Activated B cell treated with CpG ODN at 0.5 μM for 24 hours (primary cell): ENCODE measurements at regions of chr13 and their contacts with region 1.

Region 1: DNA sequence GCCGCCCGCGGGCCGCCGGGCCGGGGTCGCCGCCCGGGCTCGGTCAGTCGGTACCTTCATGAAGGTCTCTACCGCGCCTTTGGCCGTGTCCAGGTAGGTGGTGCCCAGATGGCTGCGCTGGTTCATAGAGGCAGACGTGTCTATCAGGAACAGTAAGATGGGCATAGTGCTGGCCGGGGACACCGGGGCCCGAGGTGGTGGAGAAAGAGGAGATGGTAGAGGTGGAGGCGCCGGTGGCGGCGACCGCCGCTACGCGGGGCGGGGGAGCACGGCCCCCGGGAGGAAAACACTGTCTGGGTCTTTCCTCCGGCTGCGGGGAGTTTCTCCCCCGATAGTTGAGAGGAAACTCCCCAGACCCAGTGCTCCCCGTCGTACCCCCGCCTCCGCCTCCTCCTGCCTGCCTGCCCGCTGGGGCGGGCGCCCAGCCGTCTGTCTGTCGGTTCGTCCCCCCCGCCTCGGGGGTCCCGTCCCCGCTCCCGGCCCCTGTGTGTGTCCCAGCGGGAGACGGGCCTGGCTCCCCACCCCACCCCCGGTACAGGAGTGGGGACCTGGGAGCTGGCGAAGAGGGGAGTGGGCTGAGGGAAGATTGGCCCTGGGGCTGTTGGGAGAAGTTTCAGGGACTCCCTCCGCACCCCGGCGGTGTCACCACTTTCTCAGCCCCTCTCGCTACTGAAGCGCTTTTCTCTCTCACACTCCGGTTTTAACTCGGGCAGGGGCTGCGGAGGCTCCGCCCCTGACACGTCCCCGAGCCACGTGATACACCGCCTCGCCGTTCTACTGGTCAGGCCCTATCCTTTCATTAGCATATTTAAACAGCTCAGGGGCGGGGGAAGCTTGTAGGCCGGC is at the start of gene INTS6:
- DNase-seq: peak; percentile 97
- ATAC-seq: peak; percentile 74
- H3K4me3 Mint-ChIP-seq: peak within 1 kb of the TSS; percentile 91
- H3K27ac Mint-ChIP-seq: peak within 1 kb of the TSS; percentile 98
- H3K4me1 Mint-ChIP-seq: peaks cover 39% of the 10 kb centered on the region
- H3K27me3 Mint-ChIP-seq: no peaks in the 10 kb centered on the region
- CTCF ChIP-seq: no peak
- total RNA-seq, gene INTS6: 55.3 and 68.7 TPM in 2 replicates

Region 2: DNA sequence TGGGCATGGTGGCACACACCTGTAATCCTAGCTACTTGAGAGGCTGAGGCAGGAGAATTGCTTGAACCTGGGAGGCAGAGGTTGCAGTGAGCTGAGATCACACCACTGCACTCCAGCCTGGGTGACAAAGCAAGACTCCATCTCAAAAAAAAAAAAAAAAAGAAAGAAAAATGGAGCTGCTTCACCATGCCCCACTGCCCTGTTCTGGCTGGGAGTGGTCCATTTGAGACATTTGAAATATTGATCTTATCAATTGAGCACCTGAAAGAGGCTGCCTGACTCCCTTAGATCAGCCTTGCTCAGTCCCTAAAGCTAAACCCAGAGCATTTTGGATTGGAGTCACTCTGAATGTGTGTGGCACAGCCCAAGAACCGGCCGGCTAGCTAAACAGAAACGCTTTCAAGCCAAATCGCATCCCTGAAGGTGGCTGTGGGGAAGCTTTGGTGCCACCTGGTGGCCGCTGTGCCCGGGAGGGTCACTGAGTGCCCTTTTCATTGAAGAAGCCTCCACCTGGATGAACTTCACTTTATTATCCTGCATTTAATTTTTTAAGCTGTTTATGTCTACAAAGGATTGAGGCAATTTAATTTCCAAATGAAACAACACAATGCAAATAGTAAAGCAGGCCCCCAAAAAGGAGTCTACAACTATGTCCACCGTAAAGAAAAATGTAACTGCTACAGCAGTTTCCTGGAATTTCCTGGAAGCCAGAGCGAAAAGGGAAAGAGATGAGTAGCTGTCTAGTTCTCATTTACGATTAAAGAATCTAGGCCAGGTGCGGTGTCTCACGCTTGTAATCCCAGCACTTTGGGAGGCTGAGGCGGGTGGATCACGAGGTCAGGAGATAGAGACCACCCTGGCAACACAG is 166.2 kb before region 1 on chr13:
- CTCF ChIA-PET with region 1: no interaction called
- POLR2A ChIA-PET with region 1: no interaction called
- intact Hi-C with region 1: no loop called
- DNase-seq: peak; percentile 65
- ATAC-seq: peak; percentile 71
- H3K4me3 Mint-ChIP-seq: no peak overlapping the region
- H3K27ac Mint-ChIP-seq: no peak overlapping the region
- H3K4me1 Mint-ChIP-seq: peaks cover 2% of the 10 kb centered on the region
- H3K27me3 Mint-ChIP-seq: peaks cover 4% of the 10 kb centered on the region
- CTCF ChIP-seq: peak; percentile 67

Region 3: GRCh38 chr13:51435002-51435578 is 17.5 kb before region 1 on chr13:
- CTCF ChIA-PET with region 1: interaction called, 3 read pairs
- POLR2A ChIA-PET with region 1: interaction called, 9 read pairs
- intact Hi-C with region 1: loop called (anchors 2 kb)
- DNase-seq: no peak
- ATAC-seq: peak; percentile 50
- H3K4me3 Mint-ChIP-seq: no peak overlapping the region
- H3K27ac Mint-ChIP-seq: no peak overlapping the region
- H3K4me1 Mint-ChIP-seq: peaks cover 3% of the 10 kb centered on the region
- H3K27me3 Mint-ChIP-seq: no peaks in the 10 kb centered on the region
- CTCF ChIP-seq: peak; percentile 46

Region 4: DNA sequence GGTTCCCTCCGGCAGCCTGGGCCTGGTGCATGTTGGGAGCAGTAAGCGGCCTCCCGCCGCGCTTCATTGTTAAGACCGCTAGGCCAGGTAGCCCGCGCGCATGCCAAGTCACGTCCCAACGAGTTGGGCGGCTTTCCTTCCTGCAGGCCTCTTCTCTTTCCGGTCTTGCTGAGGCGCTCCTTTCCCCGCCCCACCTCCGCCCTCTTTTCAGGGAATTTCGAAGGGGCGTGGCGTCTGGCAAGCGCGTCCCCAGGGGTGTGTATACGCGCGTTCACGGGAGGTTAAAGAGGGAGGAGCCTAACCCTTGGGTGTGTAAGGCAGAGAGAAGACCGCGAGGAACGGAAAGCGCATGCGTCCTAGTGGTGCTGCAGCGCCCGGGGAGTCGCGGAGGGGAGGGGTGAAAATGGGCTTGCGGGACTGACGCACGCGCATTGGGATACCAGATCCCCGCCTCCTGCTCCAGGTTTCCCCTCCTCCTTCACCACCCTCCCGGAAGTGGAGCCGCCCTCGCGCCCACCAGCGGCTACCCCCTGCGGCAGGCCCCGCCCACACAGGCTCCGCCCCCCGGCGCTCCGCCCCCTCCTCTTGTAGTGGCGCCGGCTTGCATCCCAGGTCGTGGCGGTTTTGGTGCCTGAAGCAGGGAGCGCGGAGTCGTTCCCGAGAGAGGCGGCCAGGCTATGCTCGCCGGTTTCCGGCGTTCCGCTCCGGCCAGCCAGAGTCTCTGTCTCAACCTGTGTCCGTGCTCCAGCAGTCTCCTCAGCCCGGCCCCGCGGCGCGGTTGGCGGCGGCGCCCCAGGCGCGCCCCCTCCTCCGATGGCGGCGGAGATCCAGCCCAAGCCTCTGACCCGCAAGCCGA is 131.5 kb after region 1 on chr13 and contains the start of gene WDFY2:
- CTCF ChIA-PET with region 1: interaction called, 6 read pairs
- POLR2A ChIA-PET with region 1: interaction called, 156 read pairs
- intact Hi-C with region 1: loop called (anchors 1 kb)
- DNase-seq: peak; percentile 100
- ATAC-seq: peak; percentile 80
- H3K4me3 Mint-ChIP-seq: peak within 1 kb of the TSS; percentile 94
- H3K27ac Mint-ChIP-seq: peak within 1 kb of the TSS; percentile 97
- H3K4me1 Mint-ChIP-seq: peaks cover 31% of the 10 kb centered on the region
- H3K27me3 Mint-ChIP-seq: no peaks in the 10 kb centered on the region
- CTCF ChIP-seq: no peak
- total RNA-seq, gene WDFY2: 16.8 and 20.8 TPM in 2 replicates

Region 5: GRCh38 chr13:51764184-51765141 is 311.9 kb after region 1 on chr13:
- CTCF ChIA-PET with region 1: interaction called, 3 read pairs
- POLR2A ChIA-PET with region 1: interaction called, 44 read pairs
- intact Hi-C with region 1: loop called (anchors 1 kb)
- DNase-seq: peak; percentile 36
- ATAC-seq: peak; percentile 91
- H3K4me3 Mint-ChIP-seq: peak overlapping the region; percentile 74
- H3K27ac Mint-ChIP-seq: peak overlapping the region; percentile 90
- H3K4me1 Mint-ChIP-seq: peaks cover 29% of the 10 kb centered on the region
- H3K27me3 Mint-ChIP-seq: no peaks in the 10 kb centered on the region
- CTCF ChIP-seq: no peak

Region 6: DNA sequence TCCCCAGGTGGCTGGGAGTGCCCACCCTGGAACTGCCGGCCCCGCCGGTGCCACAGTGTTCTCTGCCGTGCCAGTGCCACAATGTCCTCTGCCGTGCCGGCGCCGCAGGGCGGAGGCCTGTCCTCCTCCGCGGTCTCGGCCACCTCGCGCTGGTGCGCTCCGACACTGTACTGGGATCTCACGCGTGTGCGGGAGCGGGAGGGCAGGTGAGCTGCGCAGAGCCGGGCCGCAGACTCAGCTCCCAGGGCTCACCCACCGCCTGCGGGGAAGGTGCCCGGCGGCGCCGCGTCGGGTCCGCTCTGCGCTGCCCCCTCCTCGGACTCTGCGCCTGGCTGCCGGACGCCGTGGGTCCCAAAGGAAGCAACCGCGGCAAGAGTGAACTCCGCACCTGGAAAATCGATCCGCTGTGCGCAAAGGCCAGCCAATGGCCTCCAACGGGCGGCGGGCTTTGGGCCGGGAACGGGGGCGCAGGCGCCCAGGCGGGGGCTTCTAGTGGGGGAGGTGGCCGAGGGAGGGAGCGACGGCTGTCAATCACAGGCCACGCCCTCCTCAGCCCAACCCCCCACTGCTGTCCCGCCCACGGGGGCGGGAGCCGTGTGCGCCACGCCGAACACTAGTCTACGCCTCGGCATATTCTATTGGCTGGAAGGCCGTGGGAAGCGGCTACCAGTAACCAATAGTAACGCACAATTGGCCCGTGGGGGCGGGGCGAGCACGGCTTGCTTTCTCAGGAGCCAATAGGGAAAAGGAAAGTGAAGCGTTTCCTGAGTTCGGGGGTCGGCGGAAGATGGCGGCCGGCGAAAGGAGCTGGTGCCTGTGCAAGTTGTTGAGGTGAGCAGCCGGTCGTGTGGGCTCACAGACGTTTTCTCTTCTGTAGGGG is 559.3 kb after region 1 on chr13 and contains the start of gene ALG11:
- CTCF ChIA-PET with region 1: no interaction called
- POLR2A ChIA-PET with region 1: interaction called, 5 read pairs
- intact Hi-C with region 1: loop called (anchors 1 kb)
- DNase-seq: peak; percentile 98
- ATAC-seq: peak; percentile 99
- H3K4me3 Mint-ChIP-seq: peak within 1 kb of the TSS; percentile 99
- H3K27ac Mint-ChIP-seq: peak within 1 kb of the TSS; percentile 89
- H3K4me1 Mint-ChIP-seq: peaks cover 19% of the 10 kb centered on the region
- H3K27me3 Mint-ChIP-seq: peaks cover 16% of the 10 kb centered on the region
- CTCF ChIP-seq: no peak
- total RNA-seq, gene ALG11: 31.8 and 36.9 TPM in 2 replicates

Region 7: GRCh38 chr13:52652196-52652979 is 1199.8 kb after region 1 on chr13 and contains the start of gene SUGT1:
- CTCF ChIA-PET with region 1: no interaction called
- POLR2A ChIA-PET with region 1: interaction called, 8 read pairs
- intact Hi-C with region 1: loop called (anchors 2 kb)
- DNase-seq: peak; percentile 96
- ATAC-seq: peak; percentile 94
- H3K4me3 Mint-ChIP-seq: no peak within 1 kb of the TSS
- H3K27ac Mint-ChIP-seq: no peak within 1 kb of the TSS
- H3K4me1 Mint-ChIP-seq: peaks cover 11% of the 10 kb centered on the region
- H3K27me3 Mint-ChIP-seq: no peaks in the 10 kb centered on the region
- CTCF ChIP-seq: no peak
- total RNA-seq, gene SUGT1: 38.6 and 38.7 TPM in 2 replicates